Mammary epithelial cell (primary cell): ENCODE measurements at regions of chr16 and their contacts with region 1.

Region 1: DNA sequence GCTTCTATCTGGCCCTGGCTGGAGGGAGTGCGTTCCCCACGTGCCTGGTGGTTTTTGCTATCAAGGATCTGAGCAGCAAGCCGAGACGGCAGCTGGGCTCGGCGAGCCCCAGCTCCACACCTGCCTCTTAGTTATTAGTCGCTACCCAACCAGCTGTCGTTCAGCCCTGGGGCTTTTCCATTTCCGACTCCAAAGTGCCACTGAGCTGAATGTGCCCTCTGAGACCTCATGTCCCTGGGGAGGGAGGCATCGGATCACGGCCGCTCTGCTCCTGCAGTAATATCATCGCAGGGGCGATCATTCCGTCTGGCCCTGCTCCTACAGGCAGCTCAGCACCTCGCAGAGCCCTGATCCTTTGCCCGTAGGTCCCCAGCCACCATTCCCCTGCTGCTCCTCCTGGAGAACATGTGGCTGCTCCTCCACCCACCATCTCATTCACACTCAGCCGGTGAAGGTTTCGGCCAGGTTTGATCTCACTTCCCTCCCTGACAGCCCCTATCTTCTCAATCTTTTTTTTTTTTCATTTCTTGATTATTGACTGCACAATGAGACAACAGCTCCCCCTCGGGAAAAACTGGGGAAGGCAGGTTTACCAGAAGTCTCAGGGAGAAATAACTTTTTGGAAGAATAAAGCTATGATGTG is 86.7 kb downstream of the ZFHX3 start:
- DNase-seq: no peak
- H3K4me3 ChIP-seq: no peak overlapping the region
- H3K27ac ChIP-seq: no peak overlapping the region
- H3K4me1 ChIP-seq: no peaks in the 10 kb centered on the region
- H3K27me3 ChIP-seq: no peaks in the 10 kb centered on the region
- CTCF ChIP-seq: peak; percentile 42 to 46

Region 2: DNA sequence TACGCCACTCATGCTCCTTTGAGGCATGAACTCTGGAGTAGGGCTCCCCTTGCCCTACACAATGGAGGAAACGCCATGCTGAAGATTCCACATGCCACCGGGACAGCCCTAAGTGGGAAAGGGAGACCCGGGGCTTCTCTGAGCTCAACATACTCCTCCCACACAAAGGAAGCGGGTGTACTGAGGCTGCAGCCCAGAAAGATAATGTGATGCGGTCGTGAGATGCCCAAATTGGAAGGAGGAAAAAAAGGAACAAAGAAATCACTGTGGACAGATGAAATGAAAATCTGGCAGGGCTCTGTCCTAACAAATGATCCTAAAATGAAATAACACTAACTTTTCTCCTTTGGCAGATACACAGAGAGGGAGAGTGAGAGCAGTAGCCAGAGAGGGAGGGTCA is 95.4 kb before region 1 on chr16:
- CTCF ChIA-PET with region 1: no interaction called
- dilution Hi-C with region 1: loop called (anchors 5 kb)
- in situ Hi-C with region 1: no loop called
- intact Hi-C with region 1: no loop called
- DNase-seq: no peak
- H3K4me3 ChIP-seq: no peak overlapping the region
- H3K27ac ChIP-seq: no peak overlapping the region
- H3K4me1 ChIP-seq: no peaks in the 10 kb centered on the region
- H3K27me3 ChIP-seq: no peaks in the 10 kb centered on the region
- CTCF ChIP-seq: no peak